ENCODE measurements at regions of chr16 and their contacts with region 1.

Region 1: DNA sequence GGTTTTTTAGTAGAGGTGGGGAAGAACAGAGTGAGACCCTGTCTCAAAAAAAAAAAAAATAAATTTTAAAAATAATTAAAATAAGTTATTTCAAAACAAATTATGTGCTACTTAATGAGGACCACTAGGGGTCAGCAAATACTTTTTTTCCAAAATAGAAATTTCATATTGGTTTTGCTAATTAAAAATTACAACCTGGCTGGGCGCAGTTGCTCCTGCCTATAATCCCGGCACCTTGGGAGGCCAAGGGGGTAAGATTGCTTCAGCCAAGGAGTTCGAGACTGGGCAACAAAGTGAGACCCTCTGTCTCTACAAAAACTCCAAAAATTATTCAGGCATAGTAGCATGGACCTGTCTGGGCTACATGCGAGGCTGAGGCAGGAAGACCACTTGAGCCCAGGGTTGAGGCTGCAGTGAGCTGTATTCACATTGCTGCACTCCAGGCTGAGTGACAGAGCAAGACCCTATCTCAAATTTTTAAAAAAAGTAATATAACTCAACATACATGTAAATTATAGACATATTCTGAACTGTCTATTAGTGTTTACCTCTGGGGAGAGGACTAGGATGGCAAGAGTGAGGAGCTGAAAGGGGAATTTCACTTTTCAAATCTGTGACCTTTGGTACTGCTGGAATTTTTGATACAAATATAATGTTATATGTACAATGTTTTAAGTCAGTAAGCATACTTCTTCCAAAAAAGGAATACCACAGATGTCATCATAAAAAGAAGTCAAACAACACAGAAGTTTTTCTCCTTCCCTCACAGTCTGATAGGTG is 8.1 kb downstream of the MEIOB start:
- DNase-seq: peak; percentile 48

Region 2: GRCh38 chr16:1959269-1960049 is 95.6 kb after region 1 on chr16 and contains the start of gene NDUFB10:
- in situ Hi-C with region 1: loop called (anchors 10 kb)
- DNase-seq: peak; percentile 86
- total RNA-seq, gene NDUFB10: 527 and 683 TPM in 2 replicates

Region 3: DNA sequence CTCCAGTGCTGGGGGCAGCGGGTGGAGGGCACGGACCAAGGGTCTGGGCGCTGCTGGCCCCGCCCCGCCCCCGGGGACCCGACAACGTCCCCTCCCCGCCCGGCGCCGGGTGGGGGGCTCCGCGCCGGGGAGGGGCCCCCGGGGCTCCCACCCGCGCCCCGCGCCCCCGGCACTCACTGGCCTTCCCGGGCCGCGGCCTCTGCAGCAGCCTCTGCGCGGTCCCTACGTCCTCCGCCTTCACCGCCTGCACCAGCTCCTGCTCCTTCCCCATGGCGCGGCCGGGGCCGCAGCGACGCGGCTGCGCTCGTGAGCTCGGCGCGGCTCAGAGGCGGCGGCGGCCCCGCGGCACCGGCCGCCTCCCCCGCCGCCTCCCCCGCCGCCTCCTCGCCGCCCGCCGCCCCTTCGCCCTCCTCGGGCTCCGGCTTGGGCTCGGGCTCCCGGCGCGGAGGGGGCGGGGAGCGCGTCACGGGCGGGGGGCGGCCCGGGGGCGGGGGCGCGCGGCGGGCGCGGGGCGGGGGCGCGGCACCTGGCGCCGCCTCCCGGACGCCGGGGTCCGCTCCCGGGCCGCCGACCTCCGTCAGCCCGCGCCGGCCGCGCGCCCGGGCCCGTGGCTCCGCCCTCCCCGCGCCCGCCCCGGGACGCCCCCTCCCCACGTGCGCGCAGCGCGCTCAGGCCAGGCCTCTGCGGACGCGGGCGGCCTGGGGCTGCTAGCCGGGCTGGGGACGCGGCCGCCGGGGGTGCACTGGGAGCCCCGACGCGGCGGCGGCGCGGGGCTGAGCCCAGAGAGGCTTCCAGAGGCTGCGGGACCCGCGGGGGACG is 332.5 kb after region 1 on chr16 and contains the start of gene CASKIN1:
- in situ Hi-C with region 1: no loop called
- DNase-seq: no peak
- total RNA-seq, gene CASKIN1: 0.03 TPM in 1 of 2 replicates, not detected in the other

Measured in Caki2 (cell line).